ENCODE measurements at regions of chr15 and their contacts with region 1.

Region 1: GRCh38 chr15:47196057-47196456 is 521.2 kb upstream of the SEMA6D start:
- DNase-seq: peak; percentile 76
- H3K4me3 Mint-ChIP-seq: no peak overlapping the region
- H3K27ac Mint-ChIP-seq: no peak overlapping the region
- H3K4me1 Mint-ChIP-seq: no peaks in the 10 kb centered on the region
- H3K27me3 Mint-ChIP-seq: no peaks in the 10 kb centered on the region
- CTCF ChIP-seq: peak; percentile 44

Region 2: DNA sequence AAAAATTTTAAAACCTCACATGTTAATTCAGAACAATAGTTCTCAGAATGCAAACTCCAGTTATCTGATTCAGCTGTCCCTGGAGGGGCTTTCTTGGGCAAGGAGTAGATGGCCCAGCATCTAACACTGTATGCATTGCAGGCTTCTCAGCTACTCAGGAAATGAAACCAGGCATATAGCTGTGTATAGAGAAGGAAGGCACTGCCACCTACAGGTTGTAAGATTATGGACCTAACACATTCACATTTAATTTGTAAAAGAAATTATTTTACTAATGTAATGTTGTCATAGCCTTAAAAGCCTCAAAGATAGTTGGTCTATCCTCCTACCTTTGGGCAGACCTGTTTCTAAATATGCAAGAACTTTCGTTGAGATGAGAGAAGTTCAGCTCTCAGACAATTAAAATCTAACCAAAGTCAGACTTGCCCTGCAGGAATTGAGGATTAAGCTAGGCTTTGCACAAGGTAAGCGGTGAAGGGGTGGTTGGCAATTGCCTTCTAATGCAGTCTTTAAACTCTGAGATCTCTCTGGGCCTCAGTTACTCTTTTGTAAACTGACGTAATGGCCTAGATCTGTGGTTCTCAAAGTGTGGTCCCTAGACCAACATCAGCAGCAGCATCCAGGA is 792.0 kb after region 1 on chr15:
- CTCF ChIA-PET with region 1: interaction called, 48 read pairs
- intact Hi-C with region 1: loop called (anchors 1 kb)
- DNase-seq: peak; percentile 30
- H3K4me3 Mint-ChIP-seq: no peak overlapping the region
- H3K27ac Mint-ChIP-seq: no peak overlapping the region
- H3K4me1 Mint-ChIP-seq: no peaks in the 10 kb centered on the region
- H3K27me3 Mint-ChIP-seq: no peaks in the 10 kb centered on the region
- CTCF ChIP-seq: no peak

Region 3: DNA sequence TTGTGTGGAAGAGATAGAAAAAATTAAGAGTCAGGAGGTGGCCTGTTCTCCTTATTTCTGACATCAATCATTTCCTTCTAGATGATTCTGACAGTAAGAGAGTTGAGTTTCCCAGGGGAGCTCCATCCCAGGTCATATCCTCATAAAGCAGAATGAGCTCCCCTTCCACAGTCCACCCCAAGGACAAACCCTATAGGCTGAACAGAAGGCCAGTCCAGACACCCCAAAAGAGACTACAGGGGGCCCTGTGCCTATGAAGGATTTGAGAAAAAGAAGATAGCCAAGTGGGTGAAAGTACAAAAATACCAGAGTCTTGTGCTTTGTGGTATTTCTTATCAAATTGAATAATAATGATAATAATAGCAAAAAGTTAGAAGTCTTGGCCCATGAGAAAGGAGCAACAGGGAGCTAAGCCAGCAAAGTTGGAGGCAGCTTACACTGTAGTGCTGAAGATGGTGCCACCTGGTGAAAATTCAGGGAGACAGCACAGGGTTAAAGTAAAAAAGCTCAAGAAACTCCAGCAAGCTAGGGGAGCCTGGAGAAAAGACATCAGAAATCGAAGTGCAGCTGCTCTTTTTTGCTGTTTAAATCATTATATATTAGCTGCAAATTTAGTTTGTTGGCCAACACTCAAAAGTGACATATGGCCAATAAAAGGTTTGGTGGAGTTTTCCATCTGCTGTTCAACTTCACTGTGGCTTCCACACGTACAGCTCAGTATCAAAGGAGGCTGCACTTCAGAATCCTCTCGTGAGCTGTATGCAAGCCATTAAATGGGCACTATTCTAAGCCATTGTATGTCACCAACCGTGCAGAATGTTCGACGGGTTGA is 888.9 kb after region 1 on chr15:
- CTCF ChIA-PET with region 1: interaction called, 12 read pairs
- intact Hi-C with region 1: loop called (anchors 5 kb)
- DNase-seq: no peak
- H3K4me3 Mint-ChIP-seq: no peak overlapping the region
- H3K27ac Mint-ChIP-seq: no peak overlapping the region
- H3K4me1 Mint-ChIP-seq: no peaks in the 10 kb centered on the region
- H3K27me3 Mint-ChIP-seq: peaks cover 56% of the 10 kb centered on the region
- CTCF ChIP-seq: no peak

Region 4: DNA sequence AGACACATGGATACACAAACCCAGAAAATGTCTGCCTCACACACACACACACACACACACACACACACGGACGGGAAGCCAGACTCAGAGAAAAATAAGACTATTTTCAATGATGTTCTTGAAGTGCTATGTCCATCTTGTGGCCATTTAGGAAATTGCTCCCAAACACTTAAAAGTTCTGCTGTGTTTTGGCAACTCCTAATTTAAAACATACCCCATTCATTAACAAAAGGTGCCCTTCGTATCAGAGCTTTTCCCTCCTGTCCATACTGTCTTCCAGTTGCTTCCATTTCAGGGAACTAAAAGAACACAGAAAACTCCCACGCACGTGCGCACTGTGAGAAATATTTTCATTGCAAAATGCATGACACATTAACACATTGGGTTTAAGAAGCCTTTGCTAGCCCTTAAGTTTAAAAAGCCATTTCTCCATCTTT is 1054.6 kb after region 1 on chr15:
- CTCF ChIA-PET with region 1: no interaction called
- intact Hi-C with region 1: loop called (anchors 2 kb)
- DNase-seq: peak; percentile 50
- H3K4me3 Mint-ChIP-seq: no peak overlapping the region
- H3K27ac Mint-ChIP-seq: no peak overlapping the region
- H3K4me1 Mint-ChIP-seq: no peaks in the 10 kb centered on the region
- H3K27me3 Mint-ChIP-seq: peaks cover 41% of the 10 kb centered on the region
- CTCF ChIP-seq: no peak

Region 5: DNA sequence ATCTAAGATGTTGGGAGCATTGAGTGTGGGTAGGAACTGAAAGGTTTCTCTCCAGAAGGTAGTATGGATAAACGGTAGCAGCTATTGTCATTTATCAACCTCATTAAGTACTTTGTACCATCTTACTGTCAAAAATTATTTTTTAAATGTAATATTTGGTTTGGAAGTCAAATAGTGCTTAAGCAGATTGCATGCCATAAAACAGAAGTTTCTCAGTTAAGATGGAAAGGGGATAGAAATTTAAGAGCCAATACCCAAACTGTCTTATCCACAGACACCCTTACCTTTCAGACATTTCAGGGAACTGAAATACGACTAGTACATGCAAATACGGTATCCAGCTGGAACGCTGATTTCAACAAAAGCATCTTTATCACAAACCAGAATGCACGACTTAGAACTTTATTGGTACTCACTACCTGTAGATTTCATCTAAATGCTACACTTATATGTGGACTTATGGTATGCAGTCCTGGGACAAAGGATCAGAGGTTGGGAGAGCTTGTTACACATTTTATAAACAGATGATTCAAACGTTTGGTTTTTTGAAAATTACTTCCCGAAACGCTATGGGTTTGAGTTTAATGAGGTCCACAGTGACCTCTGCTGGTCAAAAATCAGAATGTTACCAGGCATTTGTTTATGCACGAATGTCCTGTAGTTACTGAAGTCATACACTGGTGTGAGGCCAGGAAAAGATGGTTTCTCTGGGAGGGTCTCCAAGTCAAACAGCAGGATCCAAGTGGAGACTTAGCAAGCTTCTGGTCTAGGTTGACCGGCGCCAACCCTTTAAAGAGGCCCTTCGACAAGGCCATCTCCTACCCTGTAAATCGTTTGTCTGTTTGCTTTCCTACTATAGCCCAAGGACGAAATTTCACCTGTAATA is 1089.5 kb after region 1 on chr15:
- CTCF ChIA-PET with region 1: interaction called, 15 read pairs
- intact Hi-C with region 1: loop called (anchors 1 kb)
- DNase-seq: peak; percentile 57
- H3K4me3 Mint-ChIP-seq: no peak overlapping the region
- H3K27ac Mint-ChIP-seq: no peak overlapping the region
- H3K4me1 Mint-ChIP-seq: no peaks in the 10 kb centered on the region
- H3K27me3 Mint-ChIP-seq: peaks cover 34% of the 10 kb centered on the region
- CTCF ChIP-seq: peak; percentile 34

Region 6: GRCh38 chr15:48352474-48353072 is 1156.5 kb after region 1 on chr15:
- CTCF ChIA-PET with region 1: interaction called, 7 read pairs
- intact Hi-C with region 1: loop called (anchors 1 kb)
- DNase-seq: peak; percentile 67
- H3K4me3 Mint-ChIP-seq: no peak overlapping the region
- H3K27ac Mint-ChIP-seq: no peak overlapping the region
- H3K4me1 Mint-ChIP-seq: peaks cover 17% of the 10 kb centered on the region
- H3K27me3 Mint-ChIP-seq: no peaks in the 10 kb centered on the region
- CTCF ChIP-seq: peak; percentile 31